Right ventricle myocardium inferior (tissue), 1 donor: ENCODE measurements at regions of chr2 and their contacts with region 1.

Region 1: GRCh38 chr2:222903234-222904220 is 42.7 kb downstream of the ACSL3 start:
- DNase-seq: peak; percentile 62
- ATAC-seq: peak; percentile 69

Region 2: DNA sequence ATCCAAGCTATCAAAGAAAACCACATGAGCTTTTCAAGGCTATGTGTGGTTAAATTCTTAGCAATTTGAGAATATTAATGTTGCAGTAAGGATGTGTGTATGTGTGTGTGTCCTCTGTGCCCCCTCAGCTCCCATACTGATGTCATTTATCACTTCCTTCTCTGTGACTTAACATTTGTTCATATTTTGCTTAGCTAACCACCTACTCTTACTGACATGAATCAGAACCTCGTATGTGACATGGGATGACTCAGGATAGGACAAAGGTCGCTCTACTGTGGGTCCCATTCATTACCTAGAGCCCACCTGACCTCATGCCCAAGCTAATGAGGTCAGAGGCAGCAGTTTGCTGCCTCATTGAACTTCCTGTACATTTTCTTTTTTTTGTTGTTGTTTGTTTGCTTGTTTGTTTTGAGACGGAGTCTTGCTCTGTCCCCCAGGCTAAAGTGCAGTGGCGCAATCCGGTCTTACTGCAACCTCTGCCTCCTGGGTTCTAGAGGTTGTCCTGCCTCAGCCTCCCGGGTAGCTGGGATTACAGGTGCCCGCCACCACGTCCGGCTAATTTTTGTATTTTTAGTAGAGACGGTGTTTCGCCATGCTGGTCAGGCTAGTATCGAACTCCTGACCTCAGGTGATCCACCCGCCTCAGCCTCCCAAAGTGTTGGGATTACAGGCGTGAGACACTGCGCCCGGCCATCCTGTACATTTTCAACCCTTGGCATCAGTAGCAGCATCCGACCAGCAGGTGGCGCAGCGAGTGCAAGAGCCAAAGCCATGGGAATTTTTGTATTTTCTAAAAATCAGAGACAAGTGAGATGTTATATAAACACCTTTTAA is 195.6 kb before region 1 on chr2:
- intact Hi-C with region 1: loop called (anchors 1 kb)
- DNase-seq: peak; percentile 94
- ATAC-seq: peak; percentile 58

Region 3: GRCh38 chr2:222797261-222797660 is 106.3 kb before region 1 on chr2:
- intact Hi-C with region 1: loop called (anchors 5 kb)
- DNase-seq: no peak
- ATAC-seq: no peak